HCT116 (cell line): ENCODE measurements at regions of chr11 and their contacts with region 1.

Region 1: DNA sequence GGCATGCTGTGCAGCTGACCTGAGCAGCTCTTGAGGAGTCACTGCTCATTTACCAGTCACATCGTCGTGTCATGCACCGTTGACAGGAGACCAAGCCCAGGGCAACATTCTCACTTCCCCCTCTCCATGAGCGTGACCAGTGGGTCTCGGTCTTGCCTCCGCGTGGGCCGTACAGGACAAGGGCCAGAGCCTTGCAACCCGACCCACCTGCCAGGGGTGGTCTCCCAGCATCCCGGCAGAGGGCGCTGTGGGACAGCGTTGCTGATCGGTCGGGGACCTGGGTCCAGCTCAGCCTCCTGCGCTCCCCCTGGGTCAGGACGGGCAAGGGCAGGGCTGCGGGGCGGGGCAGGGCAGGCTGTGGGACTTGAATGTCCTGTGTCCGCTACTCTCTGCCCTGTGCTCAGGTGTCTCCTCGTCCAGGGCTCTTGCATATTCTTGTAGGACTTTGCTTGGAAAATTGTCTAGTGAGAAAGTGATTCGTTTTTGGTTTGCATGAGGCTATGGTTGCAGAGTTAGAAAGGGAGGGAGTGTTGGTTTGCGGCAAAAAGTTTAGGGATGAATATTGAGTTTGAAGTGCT is 16.2 kb downstream of the EIF4G2 start:
- DNase-seq: peak; percentile 72
- ATAC-seq: peak; percentile 99
- H3K4me3 ChIP-seq: no peak overlapping the region
- H3K27ac ChIP-seq: no peak overlapping the region
- H3K4me1 ChIP-seq: peaks cover 0 to 8% of the 10 kb centered on the region in 2 experiments; a peak in 3 of 4 replicates
- H3K27me3 ChIP-seq: no peaks in the 10 kb centered on the region
- CTCF ChIP-seq: peak; percentile 91 to 95 (median 95)
- POLR2A ChIP-seq: no peak
- RAD21 ChIP-seq: peak; percentile 99

Region 2: GRCh38 chr11:10803676-10804075 is 11.2 kb after region 1 on chr11:
- CTCF ChIA-PET with region 1: interaction called, 15 read pairs
- POLR2A ChIA-PET with region 1: interaction called, 19 read pairs
- RAD21 ChIA-PET with region 1: no interaction called
- intact Hi-C with region 1: no loop called
- DNase-seq: no peak
- ATAC-seq: no peak
- H3K4me3 ChIP-seq: no peak overlapping the region
- H3K27ac ChIP-seq: no peak overlapping the region
- H3K4me1 ChIP-seq: peaks cover 3 to 10% of the 10 kb centered on the region in 2 experiments; a peak in 2 of 4 replicates
- H3K27me3 ChIP-seq: no peaks in the 10 kb centered on the region
- CTCF ChIP-seq: no peak
- POLR2A ChIP-seq: no peak
- RAD21 ChIP-seq: no peak

Region 3: GRCh38 chr11:11010624-11011127 is 218.2 kb after region 1 on chr11:
- CTCF ChIA-PET with region 1: interaction called, 20 read pairs
- POLR2A ChIA-PET with region 1: no interaction called
- RAD21 ChIA-PET with region 1: interaction called, 5 to 6 read pairs
- intact Hi-C with region 1: no loop called
- DNase-seq: peak; percentile 45
- ATAC-seq: peak; percentile 98
- H3K4me3 ChIP-seq: peak overlapping the region; percentile 18 to 44
- H3K27ac ChIP-seq: no peak overlapping the region
- H3K4me1 ChIP-seq: peaks cover 3 to 11% of the 10 kb centered on the region in 2 experiments; a peak in 3 of 4 replicates
- H3K27me3 ChIP-seq: no peaks in the 10 kb centered on the region
- CTCF ChIP-seq: peak; percentile 47 to 67 (median 66); a peak in 4 of 6 replicates
- POLR2A ChIP-seq: no peak
- RAD21 ChIP-seq: peak; percentile 64

Region 4: GRCh38 chr11:11028017-11028692 is 235.7 kb after region 1 on chr11:
- CTCF ChIA-PET with region 1: interaction called, 25 read pairs
- POLR2A ChIA-PET with region 1: interaction called, 4 read pairs
- RAD21 ChIA-PET with region 1: interaction called, 3 to 5 read pairs
- intact Hi-C with region 1: no loop called
- DNase-seq: peak; percentile 47
- ATAC-seq: peak; percentile 100
- H3K4me3 ChIP-seq: no peak overlapping the region
- H3K27ac ChIP-seq: no peak overlapping the region
- H3K4me1 ChIP-seq: peaks cover 0 to 6% of the 10 kb centered on the region in 2 experiments; a peak in 1 of 4 replicates
- H3K27me3 ChIP-seq: no peaks in the 10 kb centered on the region
- CTCF ChIP-seq: peak; percentile 76 to 95 (median 92)
- POLR2A ChIP-seq: no peak
- RAD21 ChIP-seq: peak; percentile 89